GM10248 (cell line): ENCODE measurements at regions of chr7 and their contacts with region 1.

Region 1: GRCh38 chr7:131040467-131040932 is 287.2 kb upstream of the MKLN1 start:
- DNase-seq: peak; percentile 64
- CTCF ChIP-seq: peak; percentile 79

Region 2: DNA sequence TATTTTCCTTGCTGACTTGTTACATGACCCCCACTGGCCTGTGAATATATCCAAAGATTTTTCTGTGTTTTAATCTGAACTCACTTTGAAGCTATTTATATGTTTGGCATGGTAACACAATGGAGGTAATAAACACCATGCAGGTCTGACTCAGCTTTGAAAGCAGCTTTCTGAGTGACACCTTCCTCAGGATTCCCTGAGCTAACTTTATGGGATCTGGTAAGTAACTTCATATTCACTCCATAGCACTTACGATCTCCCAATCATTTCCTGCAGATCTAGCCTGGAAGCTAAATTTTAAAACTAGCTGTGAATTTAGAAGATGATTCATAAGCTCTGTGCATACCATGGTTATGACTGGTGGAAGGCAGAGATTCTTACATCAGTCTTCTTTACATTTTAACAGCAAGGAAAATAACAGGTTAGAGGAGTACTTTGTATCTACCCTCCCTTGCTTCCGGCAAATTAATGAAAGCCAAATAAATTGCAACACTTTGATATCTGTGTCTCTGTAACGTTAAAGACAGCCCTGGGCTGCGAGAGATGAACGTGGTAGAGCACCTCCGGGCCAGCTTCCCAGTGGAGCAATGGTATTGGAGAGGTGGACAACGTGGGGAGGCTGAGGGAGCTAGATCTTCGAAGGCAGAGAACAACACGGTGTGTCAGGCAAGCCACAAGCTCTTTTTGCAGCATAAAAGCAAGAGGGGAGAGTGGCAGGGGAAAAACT is 136.3 kb before region 1 on chr7:
- CTCF ChIA-PET with region 1: interaction called, 141 read pairs
- POLR2A ChIA-PET with region 1: interaction called, 4 read pairs
- DNase-seq: no peak
- CTCF ChIP-seq: no peak

Region 3: GRCh38 chr7:130961128-130961601 is 79.3 kb before region 1 on chr7:
- CTCF ChIA-PET with region 1: interaction called, 20 read pairs
- POLR2A ChIA-PET with region 1: no interaction called
- DNase-seq: peak; percentile 73
- CTCF ChIP-seq: no peak

Region 4: DNA sequence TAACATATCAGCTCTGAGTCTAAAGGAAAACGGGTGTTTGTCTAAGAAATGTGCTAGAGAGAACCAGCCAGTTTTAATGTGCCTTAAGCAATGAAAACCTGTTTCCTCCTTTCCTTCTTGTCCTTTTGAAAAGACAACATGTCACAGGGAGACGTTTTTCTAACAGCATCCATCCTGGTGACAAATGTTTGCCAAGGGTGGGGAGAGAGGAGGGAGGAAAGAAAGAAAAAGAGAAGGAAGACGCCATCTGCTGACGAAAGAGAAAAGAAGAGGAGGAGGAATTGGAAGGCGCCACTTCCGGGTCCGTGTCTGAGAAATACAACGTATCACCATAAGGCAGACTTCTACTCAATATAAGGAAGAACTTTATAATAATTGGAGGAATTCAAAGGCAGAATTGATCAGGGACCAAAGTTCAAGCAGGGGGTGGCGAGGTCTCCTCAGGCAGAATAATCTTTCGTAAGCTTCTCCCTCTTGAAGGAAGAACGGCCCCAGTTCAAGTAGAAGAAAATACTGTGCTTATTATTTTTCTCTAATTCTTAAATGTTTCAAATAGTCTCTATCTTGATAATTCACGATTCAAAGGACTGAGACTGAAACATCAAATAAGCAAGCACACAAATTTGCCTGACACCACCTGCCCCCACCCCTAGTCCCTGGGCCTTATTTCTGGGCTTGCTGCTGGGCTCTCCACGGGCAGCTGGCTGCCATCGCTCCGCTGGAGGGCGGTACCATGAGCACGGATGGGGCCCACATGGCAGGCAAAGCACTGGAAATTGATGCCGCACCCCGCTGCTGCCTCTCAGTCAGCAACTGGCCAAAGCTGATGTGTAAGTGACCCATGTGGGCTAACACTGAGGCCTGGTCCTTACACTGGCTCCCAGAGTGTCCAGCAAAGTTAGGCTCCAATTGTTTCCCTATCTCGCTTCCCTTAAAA is 32.8 kb before region 1 on chr7:
- CTCF ChIA-PET with region 1: interaction called, 11 read pairs
- POLR2A ChIA-PET with region 1: interaction called, 3 read pairs
- DNase-seq: peak; percentile 55
- CTCF ChIP-seq: peak; percentile 53

Region 5: DNA sequence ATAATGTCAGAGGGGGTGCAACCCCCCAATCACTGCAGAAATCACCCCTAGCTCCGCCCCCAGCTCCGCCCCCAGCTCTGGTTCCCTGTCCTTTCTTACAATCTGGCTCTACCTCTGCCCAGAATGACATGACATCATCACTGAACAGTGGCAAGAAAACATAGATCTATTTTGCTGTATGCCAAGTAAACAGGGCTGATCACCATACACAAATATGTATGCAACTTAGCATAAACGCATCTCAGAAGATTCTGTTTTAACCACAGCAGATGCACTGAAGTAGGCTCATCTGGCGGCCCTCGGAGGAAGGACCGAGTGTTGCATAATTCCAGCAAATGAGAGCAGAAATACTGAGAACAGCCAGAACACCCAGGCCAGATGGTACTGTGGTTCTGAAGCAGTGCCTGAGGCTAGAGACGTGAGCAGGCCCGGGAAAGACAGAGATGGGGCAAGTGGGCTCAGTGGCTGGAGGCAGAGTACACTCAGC is 13.2 kb before region 1 on chr7:
- CTCF ChIA-PET with region 1: interaction called, 38 read pairs
- POLR2A ChIA-PET with region 1: no interaction called
- DNase-seq: peak; percentile 24
- CTCF ChIP-seq: no peak

Region 6: DNA sequence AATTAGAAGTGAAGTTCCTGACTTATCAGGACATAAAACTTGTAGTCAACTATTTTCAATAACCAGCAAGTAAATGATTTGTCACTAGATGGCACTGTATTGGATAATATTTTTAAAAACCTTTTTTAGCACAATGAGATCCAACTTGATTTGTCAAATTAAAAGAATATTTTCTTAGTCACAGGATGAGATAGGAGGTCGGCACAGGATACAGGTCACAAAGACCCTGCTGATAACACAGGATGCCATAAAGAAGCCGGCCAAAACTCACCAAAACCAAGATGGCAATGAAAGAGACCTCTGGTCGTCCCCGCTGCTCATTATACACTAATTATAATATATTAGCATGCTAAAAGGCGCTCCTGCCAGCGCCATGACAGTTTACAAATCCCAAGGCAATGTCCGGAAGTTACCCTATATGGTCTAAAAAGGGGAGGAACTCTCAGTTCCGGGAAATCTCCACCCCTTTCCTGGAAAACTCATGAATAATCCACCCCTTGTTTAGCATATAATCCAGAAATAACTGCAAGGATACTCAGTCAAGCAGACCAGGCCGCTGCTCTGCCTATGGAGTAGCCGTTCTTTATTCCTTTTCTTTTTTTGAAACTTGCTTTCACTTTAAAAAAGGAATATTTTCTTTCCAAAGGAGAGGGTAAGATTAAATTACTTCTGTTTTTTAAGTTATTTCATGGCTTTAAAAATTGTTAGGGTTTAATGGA is 31.4 kb after region 1 on chr7:
- CTCF ChIA-PET with region 1: interaction called, 10 read pairs
- POLR2A ChIA-PET with region 1: no interaction called
- DNase-seq: no peak
- CTCF ChIP-seq: peak; percentile 35